Naive thymus-derived CD4-positive, alpha-beta T cell (primary cell): ENCODE measurements at regions of chr6 and their contacts with region 1.

Region 1: DNA sequence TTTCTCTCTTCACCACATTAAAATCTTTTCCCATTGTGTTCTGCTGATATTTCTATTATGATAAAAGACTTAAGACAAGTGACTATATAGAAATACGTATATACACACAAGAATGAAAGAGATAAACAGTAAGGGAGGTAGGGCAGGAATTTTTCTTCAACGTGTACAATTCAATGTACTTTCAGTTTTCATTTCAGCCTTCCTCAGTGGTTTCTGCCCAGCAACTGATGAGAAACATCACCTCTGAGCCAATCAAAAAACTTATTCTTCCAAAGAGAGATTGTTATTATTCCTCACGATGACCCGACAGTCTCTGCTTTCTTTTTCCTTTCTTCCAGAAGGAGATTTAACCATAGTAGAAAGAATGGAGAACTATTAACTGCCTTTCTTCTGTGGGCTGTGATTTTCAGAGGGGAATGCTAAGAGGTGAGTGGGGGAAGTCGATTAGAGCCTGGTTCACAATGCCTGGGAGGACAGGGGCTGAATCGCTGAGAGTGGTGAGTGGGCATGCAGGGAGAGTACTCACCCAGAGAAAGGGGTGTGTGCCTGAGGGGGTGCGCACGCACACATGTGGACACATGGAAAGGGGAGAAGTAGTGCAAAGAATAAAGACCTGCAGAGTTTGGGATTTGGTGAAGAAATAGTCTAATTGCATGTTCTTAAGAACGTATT is at the start of gene BTN3A1:
- DNase-seq: peak in 8 of 9 donors; percentile 65 to 85 (median 78)
- ATAC-seq: peak; percentile 93
- H3K4me3 ChIP-seq: peak within 1 kb of the TSS; percentile 95
- H3K4me3 Mint-ChIP-seq: peak within 1 kb of the TSS; percentile 94 to 100 (median 100)
- H3K27ac ChIP-seq: peak within 1 kb of the TSS; percentile 96
- H3K27ac Mint-ChIP-seq: peak within 1 kb of the TSS; percentile 97 to 100 (median 99)
- H3K4me1 ChIP-seq: peaks cover 35 to 37% of the 10 kb centered on the region in 2 donors
- H3K4me1 Mint-ChIP-seq: peaks cover 37 to 58% (median 53%) of the 10 kb centered on the region in 7 donors
- H3K27me3 ChIP-seq: no peaks in the 10 kb centered on the region
- H3K27me3 Mint-ChIP-seq: no peaks in the 10 kb centered on the region
- total RNA-seq, gene BTN3A1: 122 to 242 (median 235) TPM

Region 2: DNA sequence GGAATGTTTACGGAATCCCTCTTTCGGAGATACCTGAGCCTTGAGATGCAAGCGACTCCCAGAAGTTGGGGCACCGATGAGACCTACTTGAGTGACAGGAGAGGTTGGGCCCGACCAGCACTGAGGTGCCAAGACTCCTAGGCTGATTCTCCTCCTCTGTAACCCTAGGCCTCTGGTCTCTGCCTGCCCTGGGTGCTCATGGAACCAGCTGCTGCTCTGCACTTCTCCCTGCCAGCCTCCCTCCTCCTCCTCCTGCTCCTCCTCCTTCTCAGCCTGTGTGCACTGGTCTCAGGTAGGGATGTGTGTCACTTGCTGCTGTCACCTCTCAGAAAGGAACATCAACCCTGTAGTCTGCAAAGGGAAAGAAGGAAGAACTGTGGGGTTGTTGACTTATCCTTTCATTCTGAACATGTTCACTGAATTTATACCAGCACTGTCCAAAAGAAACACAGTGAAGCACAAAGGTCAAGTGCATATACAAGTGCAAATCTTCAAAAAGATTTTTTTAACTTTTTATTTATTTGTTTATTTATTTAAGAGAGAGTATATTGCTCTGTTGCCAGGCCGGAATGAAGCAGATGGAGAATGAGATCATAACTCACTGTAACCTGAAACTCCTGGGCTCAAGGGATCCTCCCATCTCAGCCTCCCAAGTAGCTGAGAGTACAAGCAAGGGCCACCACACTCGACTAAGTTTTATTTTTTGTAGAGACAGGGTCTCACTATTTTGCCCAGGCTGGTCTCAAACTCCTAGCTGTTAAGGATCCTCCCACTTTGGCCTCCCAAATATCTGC is 18.3 kb before region 1 on chr6:
- CTCF ChIA-PET with region 1: no interaction called
- POLR2A ChIA-PET with region 1: no interaction called
- intact Hi-C with region 1: loop called (anchors 1 kb)
- DNase-seq: peak in 1 of 9 donors; percentile 20
- ATAC-seq: peak; percentile 9
- H3K4me3 ChIP-seq: peak overlapping the region; percentile 83
- H3K4me3 Mint-ChIP-seq: peak overlapping the region; percentile 91 to 100 (median 98)
- H3K27ac ChIP-seq: peak overlapping the region; percentile 96
- H3K27ac Mint-ChIP-seq: peak overlapping the region; percentile 81 to 99 (median 95)
- H3K4me1 ChIP-seq: peaks cover 8 to 16% of the 10 kb centered on the region in 2 donors
- H3K4me1 Mint-ChIP-seq: peaks cover 17 to 57% (median 33%) of the 10 kb centered on the region in 7 donors
- H3K27me3 ChIP-seq: no peaks in the 10 kb centered on the region
- H3K27me3 Mint-ChIP-seq: no peaks in the 10 kb centered on the region

Region 3: GRCh38 chr6:26421259-26422144 is 19.4 kb after region 1 on chr6:
- CTCF ChIA-PET with region 1: interaction called, 3 read pairs
- POLR2A ChIA-PET with region 1: no interaction called
- intact Hi-C with region 1: loop called (anchors 1 kb)
- DNase-seq: peak; percentile 11 to 71 (median 62)
- ATAC-seq: peak; percentile 96
- H3K4me3 ChIP-seq: peak overlapping the region; percentile 79
- H3K4me3 Mint-ChIP-seq: no peak overlapping the region
- H3K27ac ChIP-seq: peak overlapping the region; percentile 71
- H3K27ac Mint-ChIP-seq: peak overlapping the region in 2 of 9 donors; percentile 43 to 79
- H3K4me1 ChIP-seq: peaks cover 5 to 9% of the 10 kb centered on the region in 2 donors
- H3K4me1 Mint-ChIP-seq: peaks cover 0 to 16% (median 3%) of the 10 kb centered on the region in 7 donors
- H3K27me3 ChIP-seq: no peaks in the 10 kb centered on the region
- H3K27me3 Mint-ChIP-seq: no peaks in the 10 kb centered on the region

Region 4: DNA sequence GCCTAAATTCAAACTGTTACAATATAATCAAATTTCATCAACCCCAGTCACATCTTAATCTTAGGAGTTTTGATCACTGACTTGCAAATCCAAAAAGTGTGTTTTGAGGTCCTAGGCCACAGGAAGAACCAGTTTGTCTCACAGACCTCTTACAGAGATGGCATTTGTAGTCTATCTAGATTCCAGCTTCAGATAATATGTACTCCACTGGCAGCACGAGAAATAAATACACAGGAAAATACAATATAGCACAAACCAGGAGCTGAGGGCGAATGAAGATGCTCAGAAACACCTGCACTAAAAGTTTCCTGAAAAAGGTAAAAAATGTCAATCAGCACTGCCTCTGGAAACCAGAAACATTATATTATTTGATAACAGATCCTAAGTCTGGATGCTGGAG is 37.5 kb after region 1 on chr6:
- CTCF ChIA-PET with region 1: no interaction called
- POLR2A ChIA-PET with region 1: no interaction called
- intact Hi-C with region 1: loop called (anchors 1 kb)
- DNase-seq: peak in 3 of 9 donors; percentile 7 to 35 (median 15)
- ATAC-seq: no peak
- H3K4me3 ChIP-seq: peak overlapping the region; percentile 94
- H3K4me3 Mint-ChIP-seq: peak overlapping the region; percentile 89 to 100 (median 98)
- H3K27ac ChIP-seq: peak overlapping the region; percentile 99
- H3K27ac Mint-ChIP-seq: peak overlapping the region; percentile 95 to 100 (median 99)
- H3K4me1 ChIP-seq: peaks cover 16 to 19% of the 10 kb centered on the region in 2 donors
- H3K4me1 Mint-ChIP-seq: peaks cover 27 to 52% (median 41%) of the 10 kb centered on the region in 7 donors
- H3K27me3 ChIP-seq: no peaks in the 10 kb centered on the region
- H3K27me3 Mint-ChIP-seq: no peaks in the 10 kb centered on the region

Region 5: DNA sequence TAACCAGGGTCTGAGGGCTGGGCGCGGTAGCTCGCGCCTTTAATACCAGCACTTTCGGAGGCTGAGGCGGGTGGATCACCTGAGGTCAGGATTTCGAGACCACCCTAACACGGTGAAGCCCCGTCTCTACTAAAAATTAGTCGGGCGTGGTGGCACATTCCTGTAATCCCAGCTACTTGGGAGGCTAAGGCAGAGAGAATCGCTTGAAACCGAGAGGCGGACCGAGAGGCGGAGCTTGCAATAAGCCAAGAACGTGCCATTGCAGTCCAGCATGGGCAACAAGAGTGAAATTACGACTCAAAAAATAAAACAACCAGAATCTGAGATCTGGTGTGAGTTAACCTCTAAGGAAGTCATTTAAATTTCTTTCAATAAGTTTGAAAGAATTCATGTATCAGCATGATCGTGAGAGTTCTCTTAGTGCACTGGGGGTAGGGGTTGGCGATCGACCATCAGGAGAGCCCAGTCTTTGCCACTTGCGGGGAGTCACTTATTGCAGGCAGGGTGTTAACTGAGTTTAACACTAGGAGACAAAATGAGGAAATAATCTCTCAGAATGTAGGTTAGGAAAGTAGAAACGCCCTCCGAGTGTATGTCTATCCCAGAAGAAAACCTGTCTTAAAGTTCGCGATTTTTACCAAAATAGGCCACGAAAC is 1277.3 kb after region 1 on chr6:
- CTCF ChIA-PET with region 1: no interaction called
- POLR2A ChIA-PET with region 1: no interaction called
- intact Hi-C with region 1: no loop called
- DNase-seq: no peak
- ATAC-seq: no peak
- H3K4me3 ChIP-seq: no peak overlapping the region
- H3K4me3 Mint-ChIP-seq: peak overlapping the region in 6 of 10 donors; percentile 30 to 77 (median 59)
- H3K27ac ChIP-seq: no peak overlapping the region
- H3K27ac Mint-ChIP-seq: peak overlapping the region in 8 of 9 donors; percentile 16 to 88 (median 68)
- H3K4me1 ChIP-seq: no peaks in the 10 kb centered on the region
- H3K4me1 Mint-ChIP-seq: peaks cover 0 to 27% (median 17%) of the 10 kb centered on the region in 7 donors
- H3K27me3 ChIP-seq: peaks cover 12 to 36% of the 10 kb centered on the region in 2 donors
- H3K27me3 Mint-ChIP-seq: peaks cover 68 to 85% (median 79%) of the 10 kb centered on the region in 5 donors

Region 6: GRCh38 chr6:28252009-28252975 is 1850.2 kb after region 1 on chr6 and contains the start of gene ZKSCAN4:
- CTCF ChIA-PET with region 1: no interaction called
- POLR2A ChIA-PET with region 1: no interaction called
- intact Hi-C with region 1: no loop called
- DNase-seq: peak; percentile 44 to 86 (median 78)
- ATAC-seq: peak; percentile 96
- H3K4me3 ChIP-seq: peak within 1 kb of the TSS; percentile 100
- H3K4me3 Mint-ChIP-seq: peak within 1 kb of the TSS; percentile 84 to 100 (median 98)
- H3K27ac ChIP-seq: peak within 1 kb of the TSS; percentile 55
- H3K27ac Mint-ChIP-seq: peak within 1 kb of the TSS; percentile 85 to 98 (median 92)
- H3K4me1 ChIP-seq: peaks cover 14 to 18% of the 10 kb centered on the region in 2 donors
- H3K4me1 Mint-ChIP-seq: peaks cover 21 to 53% (median 39%) of the 10 kb centered on the region in 7 donors
- H3K27me3 ChIP-seq: no peaks in the 10 kb centered on the region
- H3K27me3 Mint-ChIP-seq: peaks cover 0 to 4% (median 0%) of the 10 kb centered on the region in 5 donors
- total RNA-seq, gene ZKSCAN4: 2.8 to 11.8 (median 8.7) TPM